CD8-positive, alpha-beta T cell (primary cell): ENCODE measurements at regions of chr7 and their contacts with region 1.

Region 1: GRCh38 chr7:66493235-66494181 is 135.2 kb upstream of the KCTD7 start:
- DNase-seq: peak; percentile 91 to 99 (median 96)
- ATAC-seq: peak; percentile 92
- H3K4me3 ChIP-seq: peak overlapping the region; percentile 60 to 96
- H3K4me3 Mint-ChIP-seq: peak overlapping the region; percentile 92
- H3K27ac ChIP-seq: peak overlapping the region; percentile 88 to 98
- H3K27ac Mint-ChIP-seq: peak overlapping the region; percentile 99
- H3K4me1 ChIP-seq: peaks cover 6% of the 10 kb centered on the region
- H3K4me1 Mint-ChIP-seq: peaks cover 21% of the 10 kb centered on the region
- H3K27me3 ChIP-seq: no peaks in the 10 kb centered on the region
- H3K27me3 Mint-ChIP-seq: no peaks in the 10 kb centered on the region
- CTCF ChIP-seq: no peak

Region 2: DNA sequence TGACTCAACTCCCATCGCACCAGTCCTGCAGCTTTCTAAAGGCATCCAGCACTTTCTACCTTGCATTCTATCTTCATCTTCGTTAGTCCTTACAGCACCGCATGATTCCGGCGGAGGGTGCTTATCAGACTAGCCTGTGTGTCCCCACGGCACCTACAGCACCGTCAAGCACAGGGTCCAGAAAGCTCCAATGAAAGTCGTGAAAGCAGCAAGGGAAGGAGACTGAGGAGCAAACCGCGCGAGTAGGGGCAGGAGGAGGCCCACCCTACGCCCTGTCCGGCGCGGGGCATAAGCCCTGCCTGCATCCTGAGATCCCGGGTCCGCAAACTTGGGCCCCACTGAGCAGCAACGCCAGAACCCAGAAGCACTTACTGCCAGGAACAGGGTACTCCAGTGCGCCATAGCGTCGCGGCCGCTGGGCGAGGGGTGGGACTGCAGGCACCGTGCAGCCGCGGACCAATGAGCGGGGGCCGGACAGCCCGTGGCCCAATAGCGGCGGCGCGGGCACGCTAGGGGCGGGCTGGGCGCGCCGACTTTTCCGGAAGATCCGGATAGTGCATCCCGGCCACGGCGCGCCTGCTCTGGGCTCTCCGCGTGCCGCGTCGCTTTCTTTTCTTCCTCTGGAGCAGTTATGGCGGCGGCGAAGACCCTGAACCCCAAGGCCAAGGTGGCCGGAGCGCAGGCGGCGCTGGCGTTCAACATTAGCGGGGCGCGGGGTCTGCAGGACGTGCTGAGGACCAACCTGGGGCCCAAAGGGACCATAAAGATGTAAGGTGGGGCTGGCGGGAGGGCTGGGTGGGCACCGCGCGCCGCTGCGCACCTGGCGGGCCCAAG is 742.8 kb before region 1 on chr7:
- CTCF ChIA-PET with region 1: no interaction called
- POLR2A ChIA-PET with region 1: no interaction called
- intact Hi-C with region 1: loop called in 1 of 2 experiments (anchors 2 kb)
- DNase-seq: peak; percentile 65 to 91 (median 87)
- ATAC-seq: peak; percentile 96
- H3K4me3 ChIP-seq: peak overlapping the region; percentile 77 to 88
- H3K4me3 Mint-ChIP-seq: peak overlapping the region; percentile 88
- H3K27ac ChIP-seq: peak overlapping the region; percentile 74 to 81
- H3K27ac Mint-ChIP-seq: peak overlapping the region; percentile 88
- H3K4me1 ChIP-seq: peaks cover 16% of the 10 kb centered on the region
- H3K4me1 Mint-ChIP-seq: peaks cover 35% of the 10 kb centered on the region
- H3K27me3 ChIP-seq: no peaks in the 10 kb centered on the region
- H3K27me3 Mint-ChIP-seq: no peaks in the 10 kb centered on the region
- CTCF ChIP-seq: no peak

Region 3: GRCh38 chr7:66114793-66115649 is 378.5 kb before region 1 on chr7 and contains the start of gene CRCP:
- CTCF ChIA-PET with region 1: no interaction called
- POLR2A ChIA-PET with region 1: interaction called, 5 read pairs
- intact Hi-C with region 1: loop called (anchors 1 to 2 kb)
- DNase-seq: peak; percentile 74 to 94 (median 86)
- ATAC-seq: peak; percentile 91
- H3K4me3 ChIP-seq: peak within 1 kb of the TSS; percentile 95 to 97
- H3K4me3 Mint-ChIP-seq: peak within 1 kb of the TSS; percentile 98
- H3K27ac ChIP-seq: peak within 1 kb of the TSS; percentile 93 to 97
- H3K27ac Mint-ChIP-seq: peak within 1 kb of the TSS; percentile 97
- H3K4me1 ChIP-seq: peaks cover 35% of the 10 kb centered on the region
- H3K4me1 Mint-ChIP-seq: peaks cover 50% of the 10 kb centered on the region
- H3K27me3 ChIP-seq: no peaks in the 10 kb centered on the region
- H3K27me3 Mint-ChIP-seq: no peaks in the 10 kb centered on the region
- CTCF ChIP-seq: no peak
- total RNA-seq, gene CRCP: 38.0 to 42.4 TPM

Region 4: GRCh38 chr7:66591799-66592596 is 98.5 kb after region 1 on chr7:
- CTCF ChIA-PET with region 1: no interaction called
- POLR2A ChIA-PET with region 1: no interaction called
- intact Hi-C with region 1: loop called (anchors 2 kb)
- DNase-seq: peak; percentile 69 to 95 (median 91)
- ATAC-seq: peak; percentile 98
- H3K4me3 ChIP-seq: peak overlapping the region; percentile 73 to 95
- H3K4me3 Mint-ChIP-seq: peak overlapping the region; percentile 99
- H3K27ac ChIP-seq: peak overlapping the region; percentile 67 to 89
- H3K27ac Mint-ChIP-seq: peak overlapping the region; percentile 98
- H3K4me1 ChIP-seq: peaks cover 37% of the 10 kb centered on the region
- H3K4me1 Mint-ChIP-seq: peaks cover 49% of the 10 kb centered on the region
- H3K27me3 ChIP-seq: no peaks in the 10 kb centered on the region
- H3K27me3 Mint-ChIP-seq: no peaks in the 10 kb centered on the region
- CTCF ChIP-seq: no peak

Region 5: DNA sequence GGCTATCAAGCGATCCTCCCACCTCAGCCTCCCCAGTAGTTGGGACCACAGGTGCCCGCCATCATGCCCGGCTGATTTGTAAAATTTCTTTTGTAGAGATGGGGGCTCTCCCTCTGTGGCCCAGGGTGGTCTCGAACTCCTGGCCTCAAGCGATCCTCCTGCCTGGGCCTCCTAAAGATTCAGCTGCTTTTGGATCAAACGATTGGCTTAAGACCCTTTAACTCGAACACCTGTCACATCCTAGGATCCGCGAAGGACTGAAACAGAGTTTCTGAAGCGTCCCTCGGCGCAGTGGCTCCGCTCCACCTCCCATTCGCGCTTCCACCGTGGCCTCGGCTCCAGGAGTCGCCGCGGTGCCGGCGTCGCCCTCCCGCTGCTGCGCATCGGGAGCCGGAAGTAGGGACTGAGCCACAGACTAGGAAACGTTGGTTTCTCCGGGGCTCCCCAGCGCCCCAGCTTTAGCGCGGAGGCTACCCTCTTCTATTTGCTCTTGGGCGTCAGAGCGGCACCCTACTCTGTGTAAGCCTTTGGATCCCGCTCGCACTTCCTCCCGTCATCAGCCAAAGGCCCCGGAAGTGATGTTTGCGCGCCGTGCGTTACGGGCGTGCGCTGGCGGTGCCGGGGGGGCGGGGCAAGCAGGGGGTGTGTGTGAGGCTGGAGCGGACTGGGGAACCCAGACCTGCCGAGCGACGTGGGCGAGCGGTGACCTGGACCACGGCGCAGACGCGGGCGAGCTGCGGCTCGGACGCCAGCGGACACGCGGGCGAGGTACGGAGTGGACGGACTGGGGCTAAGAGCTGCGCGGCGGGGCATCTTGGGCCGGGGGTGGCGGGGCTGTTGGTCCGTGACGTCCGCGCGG is 188.2 kb after region 1 on chr7:
- CTCF ChIA-PET with region 1: no interaction called
- POLR2A ChIA-PET with region 1: interaction called, 3 read pairs
- intact Hi-C with region 1: loop called (anchors 1 kb)
- DNase-seq: peak; percentile 87 to 98 (median 97)
- ATAC-seq: peak; percentile 93
- H3K4me3 ChIP-seq: peak overlapping the region; percentile 98
- H3K4me3 Mint-ChIP-seq: peak overlapping the region; percentile 93
- H3K27ac ChIP-seq: peak overlapping the region; percentile 99 to 100
- H3K27ac Mint-ChIP-seq: peak overlapping the region; percentile 97
- H3K4me1 ChIP-seq: peaks cover 13% of the 10 kb centered on the region
- H3K4me1 Mint-ChIP-seq: peaks cover 35% of the 10 kb centered on the region
- H3K27me3 ChIP-seq: no peaks in the 10 kb centered on the region
- H3K27me3 Mint-ChIP-seq: no peaks in the 10 kb centered on the region
- CTCF ChIP-seq: no peak

Region 6: DNA sequence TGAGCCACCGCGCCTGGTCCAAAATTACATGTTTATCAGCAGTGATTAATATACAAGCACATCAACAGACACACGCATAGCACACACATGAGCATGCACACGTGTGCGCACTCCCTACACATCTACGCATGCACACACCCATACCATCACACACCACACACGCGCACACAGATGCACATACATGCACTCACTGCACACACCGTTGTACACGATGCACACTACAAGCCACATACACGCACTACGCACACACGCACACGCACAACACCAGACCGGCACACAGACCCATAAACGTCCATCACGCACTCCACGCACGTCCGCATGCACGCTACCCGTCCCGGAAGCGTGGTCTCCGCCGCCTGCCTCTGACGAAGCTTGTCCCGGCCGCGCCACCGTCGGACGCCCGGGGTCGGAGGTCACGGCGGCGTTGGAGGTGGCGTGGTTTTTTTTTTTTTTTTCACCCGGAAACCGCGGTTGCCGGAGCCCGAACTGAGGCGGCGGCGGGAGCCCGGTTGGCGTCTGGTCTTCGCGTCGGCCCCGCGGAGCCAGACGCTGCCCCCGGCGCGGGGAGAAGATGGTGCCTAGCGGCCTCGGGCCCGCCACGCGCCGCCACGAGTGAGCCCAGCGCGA is 427.4 kb after region 1 on chr7 and contains the start of gene TMEM248:
- CTCF ChIA-PET with region 1: no interaction called
- POLR2A ChIA-PET with region 1: no interaction called
- intact Hi-C with region 1: loop called (anchors 1 to 5 kb)
- DNase-seq: peak; percentile 84 to 96 (median 91)
- ATAC-seq: peak; percentile 90
- H3K4me3 ChIP-seq: peak within 1 kb of the TSS; percentile 83 to 94
- H3K4me3 Mint-ChIP-seq: peak within 1 kb of the TSS; percentile 98
- H3K27ac ChIP-seq: peak within 1 kb of the TSS; percentile 75 to 80
- H3K27ac Mint-ChIP-seq: peak within 1 kb of the TSS; percentile 97
- H3K4me1 ChIP-seq: peaks cover 20% of the 10 kb centered on the region
- H3K4me1 Mint-ChIP-seq: peaks cover 37% of the 10 kb centered on the region
- H3K27me3 ChIP-seq: no peaks in the 10 kb centered on the region
- H3K27me3 Mint-ChIP-seq: no peaks in the 10 kb centered on the region
- CTCF ChIP-seq: no peak
- total RNA-seq, gene TMEM248: 67.2 to 72.1 TPM

Region 7: GRCh38 chr7:67371429-67372305 is 878.2 kb after region 1 on chr7:
- CTCF ChIA-PET with region 1: no interaction called
- POLR2A ChIA-PET with region 1: no interaction called
- intact Hi-C with region 1: no loop called
- DNase-seq: peak; percentile 9 to 72 (median 46)
- ATAC-seq: peak; percentile 61
- H3K4me3 ChIP-seq: no peak overlapping the region
- H3K4me3 Mint-ChIP-seq: no peak overlapping the region
- H3K27ac ChIP-seq: no peak overlapping the region
- H3K27ac Mint-ChIP-seq: no peak overlapping the region
- H3K4me1 ChIP-seq: no peaks in the 10 kb centered on the region
- H3K4me1 Mint-ChIP-seq: no peaks in the 10 kb centered on the region
- H3K27me3 ChIP-seq: peaks cover 0 to 3% of the 10 kb centered on the region in 2 experiments
- H3K27me3 Mint-ChIP-seq: peaks cover 27% of the 10 kb centered on the region
- CTCF ChIP-seq: peak; percentile 77